ENCODE measurements at regions of chr14 and their contacts with region 1.

Region 1: GRCh38 chr14:54857830-54858269 is 44.8 kb downstream of the GCH1 start:
- DNase-seq: no peak
- ATAC-seq: peak; percentile 76
- H3K4me3 ChIP-seq: no peak overlapping the region
- H3K27ac ChIP-seq: no peak overlapping the region
- H3K4me1 ChIP-seq: no peaks in the 10 kb centered on the region
- H3K27me3 ChIP-seq: no peaks in the 10 kb centered on the region

Region 2: GRCh38 chr14:54691525-54692283 is 166.1 kb before region 1 on chr14:
- intact Hi-C with region 1: no loop called
- DNase-seq: peak; percentile 84 to 86
- ATAC-seq: peak; percentile 78
- H3K4me3 ChIP-seq: no peak overlapping the region
- H3K27ac ChIP-seq: no peak overlapping the region
- H3K4me1 ChIP-seq: peaks cover 8 to 13% of the 10 kb centered on the region in 2 donors
- H3K27me3 ChIP-seq: no peaks in the 10 kb centered on the region

Region 3: GRCh38 chr14:54942913-54943312 is 85.1 kb after region 1 on chr14:
- intact Hi-C with region 1: loop called in 1 of 2 experiments (anchors 5 kb)
- DNase-seq: no peak
- ATAC-seq: no peak
- H3K4me3 ChIP-seq: no peak overlapping the region
- H3K27ac ChIP-seq: no peak overlapping the region
- H3K4me1 ChIP-seq: no peaks in the 10 kb centered on the region
- H3K27me3 ChIP-seq: no peaks in the 10 kb centered on the region